Left ventricle myocardium inferior (tissue), 1 donor: ENCODE measurements at regions of chr11 and their contacts with region 1.

Region 1: DNA sequence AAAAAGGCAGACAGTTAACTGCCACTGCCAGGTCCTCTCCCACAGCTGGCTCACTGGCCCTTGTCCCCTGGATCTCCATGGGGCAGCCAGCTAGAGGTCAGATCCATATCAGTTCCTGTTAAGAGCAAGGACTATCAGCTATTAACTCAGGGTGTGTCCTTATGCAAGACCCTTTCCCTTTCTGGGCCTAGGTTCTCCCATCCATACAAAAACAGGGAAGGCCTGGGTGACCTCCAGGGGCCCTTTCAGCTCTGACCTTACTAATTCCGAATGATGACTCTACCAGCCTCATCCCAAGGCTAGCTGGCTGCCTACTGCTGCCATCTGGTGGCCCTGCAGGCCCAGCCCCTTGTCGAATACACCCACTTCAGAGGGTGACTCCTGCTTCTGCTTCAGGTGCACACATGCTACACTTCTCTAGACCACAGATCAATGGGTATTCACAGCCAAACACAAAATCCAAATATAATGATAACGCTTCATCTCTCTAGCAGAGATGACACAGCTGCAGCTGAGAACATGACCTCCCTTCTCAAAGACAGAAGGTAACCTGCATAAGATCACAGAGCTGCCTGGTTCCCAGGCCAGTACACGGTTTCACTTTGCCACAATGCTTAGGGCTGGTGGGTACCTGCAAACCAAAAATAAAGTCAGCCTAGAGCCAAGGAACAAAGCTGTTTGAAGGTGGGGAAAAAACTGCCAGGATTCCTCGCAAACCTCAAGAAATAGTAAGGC is 34.1 kb downstream of the SERGEF start:
- DNase-seq: peak; percentile 42
- H3K4me3 ChIP-seq: no peak overlapping the region
- H3K27ac ChIP-seq: no peak overlapping the region
- H3K4me1 ChIP-seq: peaks cover 11% of the 10 kb centered on the region
- H3K27me3 ChIP-seq: no peaks in the 10 kb centered on the region
- CTCF ChIP-seq: peak; percentile 81

Region 2: GRCh38 chr11:17730608-17731462 is 247.9 kb before region 1 on chr11:
- intact Hi-C with region 1: loop called (anchors 2 kb)
- DNase-seq: peak; percentile 83
- H3K4me3 ChIP-seq: no peak overlapping the region
- H3K27ac ChIP-seq: no peak overlapping the region
- H3K4me1 ChIP-seq: peaks cover 14% of the 10 kb centered on the region
- H3K27me3 ChIP-seq: peaks cover 60% of the 10 kb centered on the region
- CTCF ChIP-seq: peak; percentile 86

Region 3: DNA sequence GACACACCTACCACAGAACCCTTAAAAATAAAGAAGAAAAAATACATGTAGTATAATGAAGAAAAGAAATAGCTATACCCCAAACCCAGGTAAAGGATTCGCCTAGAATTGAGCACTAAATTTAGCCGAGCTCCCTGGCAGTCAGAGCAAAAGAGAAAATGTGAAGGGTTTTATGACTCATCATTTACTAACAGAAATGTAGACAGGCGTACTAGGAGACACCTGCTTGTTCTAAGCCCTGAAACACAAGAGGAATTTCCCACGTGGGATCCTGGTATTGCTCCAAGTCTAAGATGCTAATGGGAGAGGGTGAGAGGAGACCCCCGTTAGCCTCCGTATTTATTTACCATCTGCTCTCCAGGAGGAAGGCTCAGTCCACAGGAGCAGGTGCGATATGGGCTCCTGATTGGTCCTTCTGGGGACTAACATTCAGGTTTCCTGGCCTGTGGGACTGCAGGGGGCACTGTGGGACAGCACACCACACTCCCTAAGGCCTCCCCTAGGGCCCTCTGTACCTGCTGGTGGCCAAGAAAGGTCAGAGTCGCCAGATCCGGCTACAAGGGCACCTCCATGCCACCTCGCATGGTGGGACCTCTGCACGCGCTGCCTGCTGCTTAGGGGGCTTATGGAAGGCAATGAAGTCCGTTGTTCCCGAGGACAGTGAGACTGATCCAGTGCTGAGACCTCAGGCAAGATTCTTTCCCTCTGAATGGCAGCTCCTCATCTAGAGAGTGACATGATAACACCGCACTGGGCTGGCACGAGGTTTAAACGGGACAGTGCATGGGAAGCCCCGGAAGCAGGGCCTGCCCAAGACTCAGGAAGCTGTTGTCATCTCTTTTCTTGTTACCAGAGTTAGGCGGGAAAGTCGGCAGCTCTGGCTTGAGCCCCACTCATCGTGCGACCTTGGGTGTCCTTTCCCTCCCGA is 218.4 kb before region 1 on chr11:
- intact Hi-C with region 1: loop called (anchors 10 kb)
- DNase-seq: peak; percentile 51
- H3K4me3 ChIP-seq: no peak overlapping the region
- H3K27ac ChIP-seq: no peak overlapping the region
- H3K4me1 ChIP-seq: peaks cover 7% of the 10 kb centered on the region
- H3K27me3 ChIP-seq: peaks cover 12% of the 10 kb centered on the region
- CTCF ChIP-seq: peak; percentile 69

Region 4: DNA sequence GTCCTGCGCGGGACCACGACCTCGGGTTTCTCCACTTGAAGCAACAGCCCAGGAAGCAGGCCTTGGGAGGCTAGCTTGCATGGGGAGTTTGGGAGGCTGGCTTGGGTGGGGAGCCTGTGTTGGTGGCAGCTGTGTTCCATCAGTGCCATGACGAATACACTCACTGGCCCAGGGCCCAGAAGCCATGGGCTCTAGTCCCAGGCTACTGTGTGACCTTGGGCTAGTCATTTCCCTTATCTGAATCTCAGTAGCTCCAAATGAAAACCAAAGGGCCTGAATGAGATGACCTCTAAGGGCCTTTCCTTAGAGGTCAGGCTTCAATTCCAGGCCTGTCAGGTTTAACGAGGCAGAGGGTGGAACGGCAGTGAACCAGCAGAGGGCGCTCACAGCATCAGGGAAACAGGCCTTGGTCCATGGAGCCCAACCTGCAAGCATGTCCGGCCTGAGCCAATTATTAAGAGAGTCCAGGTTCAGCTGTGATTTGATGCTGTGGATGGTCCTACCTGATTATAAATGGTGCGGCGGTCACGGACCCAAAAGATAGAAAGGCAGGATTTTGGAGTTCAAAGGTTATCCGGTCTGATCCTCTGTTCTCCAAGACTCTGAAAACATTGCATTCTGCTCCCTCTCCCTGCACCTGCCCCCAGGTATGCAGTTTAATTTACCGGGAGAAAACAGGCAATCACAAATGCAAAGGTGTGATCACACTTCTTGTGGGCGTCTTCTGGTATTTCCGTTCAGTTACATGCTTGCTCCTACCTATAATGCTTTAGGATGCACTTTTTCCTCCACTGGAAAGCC is 797.0 kb after region 1 on chr11:
- intact Hi-C with region 1: no loop called
- DNase-seq: peak; percentile 28
- H3K4me3 ChIP-seq: no peak overlapping the region
- H3K27ac ChIP-seq: no peak overlapping the region
- H3K4me1 ChIP-seq: no peaks in the 10 kb centered on the region
- H3K27me3 ChIP-seq: peaks cover 31% of the 10 kb centered on the region
- CTCF ChIP-seq: peak; percentile 69